CD4-positive, alpha-beta T cell (primary cell): ENCODE measurements at regions of chr12 and their contacts with region 1.

Region 1: DNA sequence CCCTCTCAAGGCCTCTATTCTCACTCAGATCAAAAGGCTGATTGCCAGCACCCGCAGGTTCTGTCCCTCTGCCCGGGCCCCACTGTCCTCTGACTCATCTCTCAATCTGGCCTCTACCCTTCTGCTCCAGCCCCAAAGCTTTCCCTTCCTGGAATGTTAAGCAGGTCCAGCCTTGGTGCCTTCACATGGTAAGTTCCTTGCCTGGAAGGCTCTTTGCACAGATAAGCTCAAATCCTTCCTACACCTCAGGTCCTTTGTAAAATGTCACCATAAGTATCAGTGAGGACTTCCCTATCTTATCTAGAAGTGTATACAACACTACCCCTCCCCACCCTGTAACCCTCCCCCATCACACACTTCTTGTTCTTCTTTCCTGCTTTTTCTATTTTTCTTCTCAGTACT is 22.2 kb downstream of the LPCAT3 start:
- DNase-seq: no peak
- ATAC-seq: no peak
- H3K4me3 ChIP-seq: no peak overlapping the region
- H3K4me3 Mint-ChIP-seq: no peak overlapping the region
- H3K27ac ChIP-seq: no peak overlapping the region
- H3K27ac Mint-ChIP-seq: no peak overlapping the region
- H3K4me1 ChIP-seq: no peaks in the 10 kb centered on the region
- H3K4me1 Mint-ChIP-seq: peaks cover 16% of the 10 kb centered on the region
- H3K27me3 ChIP-seq: no peaks in the 10 kb centered on the region
- H3K27me3 Mint-ChIP-seq: no peaks in the 10 kb centered on the region
- CTCF ChIP-seq: no peak

Region 2: GRCh38 chr12:7031306-7031705 is 35.3 kb after region 1 on chr12:
- CTCF ChIA-PET with region 1: no interaction called
- POLR2A ChIA-PET with region 1: no interaction called
- intact Hi-C with region 1: loop called in 1 of 2 experiments (anchors 5 kb)
- DNase-seq: no peak
- ATAC-seq: no peak
- H3K4me3 ChIP-seq: no peak overlapping the region
- H3K4me3 Mint-ChIP-seq: no peak overlapping the region
- H3K27ac ChIP-seq: no peak overlapping the region
- H3K27ac Mint-ChIP-seq: no peak overlapping the region
- H3K4me1 ChIP-seq: no peaks in the 10 kb centered on the region
- H3K4me1 Mint-ChIP-seq: no peaks in the 10 kb centered on the region
- H3K27me3 ChIP-seq: no peaks in the 10 kb centered on the region
- H3K27me3 Mint-ChIP-seq: no peaks in the 10 kb centered on the region
- CTCF ChIP-seq: no peak